K562 (cell line): ENCODE measurements at regions of chr1 and their contacts with region 1.

Region 1: GRCh38 chr1:219347921-219348391 is 174.3 kb downstream of the LYPLAL1 start:
- DNase-seq: no peak
- ATAC-seq: no peak
- H3K4me3 ChIP-seq: no peak overlapping the region
- H3K27ac ChIP-seq: no peak overlapping the region
- H3K4me1 ChIP-seq: no peaks in the 10 kb centered on the region
- H3K27me3 ChIP-seq: no peaks in the 10 kb centered on the region
- CTCF ChIP-seq: no peak
- EP300 ChIP-seq: no peak
- POLR2A ChIP-seq: no peak
- RAD21 ChIP-seq: no peak

Region 2: GRCh38 chr1:219281834-219282233 is 66.1 kb before region 1 on chr1:
- CTCF ChIA-PET with region 1: no interaction called
- POLR2A ChIA-PET with region 1: no interaction called
- in situ Hi-C with region 1: no loop called
- intact Hi-C with region 1: no loop called
- DNase-seq: no peak
- ATAC-seq: no peak
- H3K4me3 ChIP-seq: no peak overlapping the region
- H3K27ac ChIP-seq: no peak overlapping the region
- H3K4me1 ChIP-seq: no peaks in the 10 kb centered on the region
- H3K27me3 ChIP-seq: no peaks in the 10 kb centered on the region
- CTCF ChIP-seq: no peak
- EP300 ChIP-seq: no peak
- POLR2A ChIP-seq: no peak
- RAD21 ChIP-seq: no peak

Region 3: GRCh38 chr1:219293410-219293809 is 54.5 kb before region 1 on chr1:
- CTCF ChIA-PET with region 1: no interaction called
- POLR2A ChIA-PET with region 1: no interaction called
- in situ Hi-C with region 1: no loop called
- intact Hi-C with region 1: loop called (anchors 5 kb)
- DNase-seq: no peak
- ATAC-seq: no peak
- H3K4me3 ChIP-seq: no peak overlapping the region
- H3K27ac ChIP-seq: no peak overlapping the region
- H3K4me1 ChIP-seq: no peaks in the 10 kb centered on the region
- H3K27me3 ChIP-seq: no peaks in the 10 kb centered on the region
- CTCF ChIP-seq: no peak
- EP300 ChIP-seq: no peak
- POLR2A ChIP-seq: no peak
- RAD21 ChIP-seq: no peak

Region 4: DNA sequence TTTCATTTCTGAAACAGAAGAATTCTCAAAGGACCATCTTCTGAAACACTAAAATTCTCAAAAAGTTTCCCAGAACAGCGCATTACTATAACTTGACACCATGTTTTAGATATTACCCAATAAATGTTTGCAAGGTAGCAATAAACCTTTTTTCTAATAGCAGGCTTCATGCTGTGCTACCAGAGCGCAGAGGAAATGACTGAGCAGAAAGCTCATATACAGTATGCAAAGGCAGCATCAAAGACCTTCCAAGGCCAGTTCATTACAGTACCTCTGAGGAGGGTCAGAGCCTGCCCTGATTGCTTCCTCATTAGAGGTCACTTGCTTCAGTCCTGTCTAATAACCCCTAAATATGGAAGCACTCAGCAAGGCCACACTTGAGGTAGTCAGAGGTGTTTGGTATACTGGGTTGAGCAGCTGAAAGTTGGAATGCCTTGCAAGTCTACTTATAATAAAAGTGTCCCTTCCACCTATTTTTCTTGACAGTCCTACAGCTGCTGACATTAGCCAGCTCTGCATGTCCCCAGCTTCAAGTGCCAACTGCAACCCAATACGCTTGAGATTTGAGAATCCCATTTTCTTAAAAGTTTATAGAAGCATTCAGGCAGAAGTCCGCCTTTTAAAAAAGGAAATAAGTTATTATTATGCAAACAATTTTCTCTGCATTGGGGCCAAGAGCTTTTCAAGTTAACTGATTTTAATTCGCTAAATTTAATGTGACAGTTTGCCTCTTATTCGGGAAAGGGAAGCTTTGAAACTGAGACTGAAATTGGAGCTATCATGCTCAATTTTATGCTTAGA is 57.8 kb after region 1 on chr1:
- CTCF ChIA-PET with region 1: no interaction called
- POLR2A ChIA-PET with region 1: no interaction called
- in situ Hi-C with region 1: no loop called
- intact Hi-C with region 1: loop called (anchors 10 kb)
- DNase-seq: no peak
- ATAC-seq: no peak
- H3K4me3 ChIP-seq: no peak overlapping the region
- H3K27ac ChIP-seq: no peak overlapping the region
- H3K4me1 ChIP-seq: no peaks in the 10 kb centered on the region
- H3K27me3 ChIP-seq: no peaks in the 10 kb centered on the region
- CTCF ChIP-seq: no peak
- EP300 ChIP-seq: no peak
- POLR2A ChIP-seq: no peak
- RAD21 ChIP-seq: no peak

Region 5: DNA sequence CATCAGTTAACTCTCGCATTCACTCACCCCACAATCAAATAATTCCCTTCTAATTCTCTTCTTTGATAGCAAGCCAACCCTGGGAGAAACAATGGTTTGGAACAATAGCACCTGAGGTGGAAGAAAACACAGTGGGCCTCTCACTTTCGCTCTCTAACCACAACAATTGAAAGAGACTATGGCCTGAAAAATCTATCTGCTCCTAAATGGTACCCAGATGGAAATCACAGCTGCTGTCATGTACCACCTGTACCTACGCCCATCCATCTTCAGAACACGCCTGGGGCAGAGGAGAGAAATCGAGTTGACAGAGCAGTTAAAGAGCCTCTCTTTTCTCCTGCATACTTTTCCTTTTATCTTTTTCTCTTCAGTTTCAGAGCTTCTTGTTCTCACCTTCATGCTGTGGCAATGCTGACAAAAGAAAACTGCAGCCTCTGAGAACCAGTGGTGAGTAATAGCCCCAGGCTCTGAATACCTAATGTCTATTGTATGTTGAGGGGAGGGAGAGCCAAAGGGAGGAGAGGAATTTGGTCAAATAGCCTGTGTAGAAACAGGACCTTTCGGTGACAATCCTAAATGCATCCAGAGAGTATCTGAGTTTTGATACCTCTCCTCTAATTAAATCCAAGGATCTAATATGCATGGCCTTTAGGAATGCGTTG is 207.2 kb after region 1 on chr1:
- CTCF ChIA-PET with region 1: no interaction called
- POLR2A ChIA-PET with region 1: no interaction called
- in situ Hi-C with region 1: no loop called
- intact Hi-C with region 1: no loop called
- DNase-seq: no peak
- ATAC-seq: no peak
- H3K4me3 ChIP-seq: no peak overlapping the region
- H3K27ac ChIP-seq: no peak overlapping the region
- H3K4me1 ChIP-seq: no peaks in the 10 kb centered on the region
- H3K27me3 ChIP-seq: no peaks in the 10 kb centered on the region
- CTCF ChIP-seq: no peak
- EP300 ChIP-seq: no peak
- POLR2A ChIP-seq: no peak
- RAD21 ChIP-seq: no peak